ENCODE measurements at regions of chr15 and their contacts with region 1.

Region 1: GRCh38 chr15:48025118-48025517 is 95.7 kb upstream of the SLC24A5 start:
- DNase-seq: peak; percentile 2
- H3K4me3 ChIP-seq: no peak overlapping the region
- H3K27ac ChIP-seq: no peak overlapping the region
- H3K4me1 ChIP-seq: no peaks in the 10 kb centered on the region
- H3K27me3 ChIP-seq: peaks cover 0 to 4% of the 10 kb centered on the region in 2 experiments
- CTCF ChIP-seq: no peak
- POLR2A ChIP-seq: no peak

Region 2: DNA sequence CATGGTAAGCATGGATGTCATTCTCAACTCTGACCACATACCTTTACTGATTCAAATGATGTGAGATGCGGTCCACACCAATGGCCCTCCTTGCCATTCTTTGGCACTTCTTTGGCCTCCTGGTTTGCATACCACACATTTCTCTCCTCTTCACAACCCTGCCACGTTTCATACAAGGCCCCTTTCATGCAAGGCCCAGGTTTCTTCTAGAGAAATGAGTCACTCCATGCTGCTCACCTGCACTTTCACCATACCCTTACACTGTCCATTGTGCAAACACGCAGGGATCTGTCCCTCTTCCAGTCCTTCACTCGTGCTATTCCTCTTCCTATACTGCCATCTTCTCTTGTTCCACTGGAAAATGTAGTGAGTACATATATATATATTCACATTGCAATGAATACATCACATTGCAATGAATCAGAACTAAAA is 71.3 kb after region 1 on chr15:
- CTCF ChIA-PET with region 1: no interaction called
- POLR2A ChIA-PET with region 1: no interaction called
- dilution Hi-C with region 1: no loop called
- intact Hi-C with region 1: no loop called
- DNase-seq: no peak
- H3K4me3 ChIP-seq: no peak overlapping the region
- H3K27ac ChIP-seq: no peak overlapping the region
- H3K4me1 ChIP-seq: no peaks in the 10 kb centered on the region
- H3K27me3 ChIP-seq: peaks cover 3 to 8% of the 10 kb centered on the region in 2 experiments
- CTCF ChIP-seq: no peak
- POLR2A ChIP-seq: no peak

Region 3: DNA sequence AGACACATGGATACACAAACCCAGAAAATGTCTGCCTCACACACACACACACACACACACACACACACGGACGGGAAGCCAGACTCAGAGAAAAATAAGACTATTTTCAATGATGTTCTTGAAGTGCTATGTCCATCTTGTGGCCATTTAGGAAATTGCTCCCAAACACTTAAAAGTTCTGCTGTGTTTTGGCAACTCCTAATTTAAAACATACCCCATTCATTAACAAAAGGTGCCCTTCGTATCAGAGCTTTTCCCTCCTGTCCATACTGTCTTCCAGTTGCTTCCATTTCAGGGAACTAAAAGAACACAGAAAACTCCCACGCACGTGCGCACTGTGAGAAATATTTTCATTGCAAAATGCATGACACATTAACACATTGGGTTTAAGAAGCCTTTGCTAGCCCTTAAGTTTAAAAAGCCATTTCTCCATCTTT is 225.5 kb after region 1 on chr15:
- CTCF ChIA-PET with region 1: interaction called, 3 read pairs
- POLR2A ChIA-PET with region 1: no interaction called
- dilution Hi-C with region 1: no loop called
- intact Hi-C with region 1: loop called (anchors 2 kb)
- DNase-seq: peak; percentile 71
- H3K4me3 ChIP-seq: no peak overlapping the region
- H3K27ac ChIP-seq: no peak overlapping the region
- H3K4me1 ChIP-seq: no peaks in the 10 kb centered on the region
- H3K27me3 ChIP-seq: no peaks in the 10 kb centered on the region
- CTCF ChIP-seq: peak; percentile 57 to 61
- POLR2A ChIP-seq: no peak